ENCODE measurements at regions of chr11 and their contacts with region 1.

Region 1: GRCh38 chr11:83007909-83008580 is 63.7 kb downstream of the RAB30 start:
- DNase-seq: peak; percentile 88
- ATAC-seq: peak; percentile 96
- H3K4me3 ChIP-seq: peak overlapping the region; percentile 16 to 40 (median 40)
- H3K27ac ChIP-seq: peak overlapping the region; percentile 72
- H3K4me1 ChIP-seq: peaks cover 71% of the 10 kb centered on the region
- H3K27me3 ChIP-seq: no peaks in the 10 kb centered on the region
- CTCF ChIP-seq: peak; percentile 42
- EP300 ChIP-seq: peak in 1 of 2 experiments; percentile 93; a peak in 2 of 4 replicates
- POLR2A ChIP-seq: no peak
- RAD21 ChIP-seq: peak; percentile 15; the same call in 1 of the 2 replicates

Region 2: DNA sequence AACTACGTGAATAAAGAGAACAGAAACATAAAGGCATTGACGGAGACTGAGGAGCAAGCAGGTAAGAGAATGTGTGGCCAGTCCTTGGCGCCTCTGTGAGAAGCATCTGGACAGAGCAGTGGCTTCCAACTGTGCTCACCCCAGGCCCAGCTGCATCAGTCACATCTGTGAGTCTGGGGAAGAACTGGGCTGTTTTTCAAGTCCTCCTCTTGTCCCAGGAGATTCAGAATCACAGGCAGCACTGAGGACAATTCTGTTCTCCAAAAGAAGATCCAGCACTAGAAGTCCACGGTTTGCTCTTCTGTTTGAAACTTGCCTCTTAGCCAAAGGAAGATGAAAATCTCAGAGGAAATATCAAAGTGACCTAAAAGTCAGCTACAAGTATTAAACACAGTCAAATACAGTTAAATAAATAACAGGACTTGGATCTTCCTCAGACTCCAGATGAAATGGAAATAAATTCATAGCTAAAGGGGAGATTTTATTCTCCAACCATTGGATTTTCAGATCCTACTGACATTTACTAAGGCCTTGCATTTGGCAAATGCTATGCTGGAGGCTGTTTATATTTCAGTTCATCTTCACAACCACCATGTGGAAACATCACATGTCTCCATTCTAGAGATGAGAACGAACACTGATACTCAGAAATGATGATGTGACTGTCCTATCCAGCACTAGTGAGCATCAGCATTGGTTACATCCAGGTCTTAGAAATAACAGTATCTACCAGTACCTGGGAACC is 288.5 kb before region 1 on chr11:
- CTCF ChIA-PET with region 1: no interaction called
- POLR2A ChIA-PET with region 1: no interaction called
- in situ Hi-C with region 1: no loop called
- intact Hi-C with region 1: no loop called
- DNase-seq: no peak
- ATAC-seq: no peak
- H3K4me3 ChIP-seq: no peak overlapping the region
- H3K27ac ChIP-seq: no peak overlapping the region
- H3K4me1 ChIP-seq: no peaks in the 10 kb centered on the region
- H3K27me3 ChIP-seq: peaks cover 0 to 16% of the 10 kb centered on the region in 2 experiments; a peak in 3 of 5 replicates
- CTCF ChIP-seq: no peak
- EP300 ChIP-seq: no peak
- POLR2A ChIP-seq: no peak
- RAD21 ChIP-seq: no peak

Region 3: GRCh38 chr11:82959987-82960778 is 47.9 kb before region 1 on chr11:
- CTCF ChIA-PET with region 1: no interaction called
- POLR2A ChIA-PET with region 1: interaction called, 10 read pairs
- in situ Hi-C with region 1: no loop called
- intact Hi-C with region 1: no loop called
- DNase-seq: no peak
- ATAC-seq: no peak
- H3K4me3 ChIP-seq: no peak overlapping the region
- H3K27ac ChIP-seq: no peak overlapping the region
- H3K4me1 ChIP-seq: peaks cover 16% of the 10 kb centered on the region
- H3K27me3 ChIP-seq: no peaks in the 10 kb centered on the region
- CTCF ChIP-seq: no peak
- EP300 ChIP-seq: no peak
- POLR2A ChIP-seq: no peak
- RAD21 ChIP-seq: no peak

Region 4: DNA sequence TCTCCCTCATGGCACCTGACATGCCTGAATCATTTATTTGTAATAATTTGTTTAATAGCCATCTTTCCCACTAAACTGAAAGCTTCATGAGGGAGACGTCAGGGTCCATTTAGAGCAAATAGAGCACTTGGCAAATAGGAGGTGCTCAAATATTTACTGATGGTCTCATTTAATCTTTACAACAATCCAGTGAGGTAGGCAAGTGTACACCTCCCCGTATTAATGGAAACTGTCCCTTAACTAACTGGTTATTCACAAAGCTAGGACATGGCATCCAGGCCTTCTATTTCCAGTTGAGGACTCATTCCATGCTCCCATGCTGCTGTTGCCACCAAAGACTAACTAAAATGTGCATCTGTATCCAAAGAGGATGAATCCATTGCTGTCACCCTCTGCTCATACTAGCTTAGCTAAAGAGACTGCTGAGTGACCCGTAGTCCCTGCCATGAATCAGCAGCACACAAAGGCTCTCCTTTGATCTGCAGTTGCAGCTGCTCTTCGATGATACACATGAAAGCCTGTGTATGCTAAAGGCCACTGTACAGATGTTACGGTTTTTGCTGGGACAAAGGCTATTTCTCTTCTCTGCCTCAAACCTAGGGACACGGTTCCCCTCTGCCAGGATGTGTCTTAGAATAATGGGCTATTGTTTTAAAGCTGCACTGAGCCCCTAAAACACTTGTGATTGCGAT is 19.0 kb before region 1 on chr11:
- CTCF ChIA-PET with region 1: no interaction called
- POLR2A ChIA-PET with region 1: interaction called, 15 read pairs
- in situ Hi-C with region 1: no loop called
- intact Hi-C with region 1: loop called (anchors 2 kb)
- DNase-seq: peak; percentile 96
- ATAC-seq: peak; percentile 99
- H3K4me3 ChIP-seq: peak overlapping the region; percentile 20 to 53 (median 22); a peak in 4 of 6 replicates
- H3K27ac ChIP-seq: peak overlapping the region; percentile 82
- H3K4me1 ChIP-seq: peaks cover 44% of the 10 kb centered on the region
- H3K27me3 ChIP-seq: no peaks in the 10 kb centered on the region
- CTCF ChIP-seq: peak; percentile 14; the same call in 1 of the 2 replicates
- EP300 ChIP-seq: peak; percentile 62 to 74; a peak in 3 of 4 replicates
- POLR2A ChIP-seq: no peak
- RAD21 ChIP-seq: peak; percentile 34; the same call in 1 of the 2 replicates

Region 5: DNA sequence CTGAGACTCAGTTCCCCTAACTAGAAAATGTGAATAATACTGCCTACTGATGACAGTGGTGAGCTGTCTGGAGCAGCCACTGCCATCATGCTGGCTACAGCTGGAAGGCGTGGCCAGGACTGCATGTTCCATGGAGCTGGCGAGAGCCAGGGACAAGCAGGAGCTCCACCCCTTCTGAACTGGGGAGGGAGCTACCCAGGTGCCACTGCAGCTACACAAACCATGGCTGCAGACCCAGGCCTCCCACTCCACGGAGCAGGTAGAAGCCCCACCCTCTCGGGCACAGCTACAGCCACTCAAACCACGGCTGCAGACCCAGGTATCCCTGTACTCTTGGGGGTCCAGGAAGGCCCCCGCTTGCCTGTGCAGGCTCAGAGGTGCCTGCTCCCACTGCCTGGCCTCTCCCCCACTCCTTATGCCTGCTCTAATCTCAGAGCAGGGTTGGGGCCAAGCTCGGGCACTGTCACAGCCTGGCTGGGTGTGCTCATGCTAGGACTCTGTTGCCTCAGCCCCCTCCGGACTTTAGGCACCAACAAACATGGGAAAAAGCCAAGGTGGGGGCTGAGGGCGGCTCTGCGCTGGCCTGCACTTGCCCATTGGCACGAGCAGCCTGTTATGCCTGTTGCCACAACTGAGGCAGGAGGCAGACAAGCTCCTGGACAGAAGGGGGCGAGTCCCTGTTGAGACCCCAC is 12.0 kb after region 1 on chr11:
- CTCF ChIA-PET with region 1: no interaction called
- POLR2A ChIA-PET with region 1: interaction called, 12 read pairs
- in situ Hi-C with region 1: no loop called
- intact Hi-C with region 1: no loop called
- DNase-seq: no peak
- ATAC-seq: peak; percentile 48; the same call in 2 of the 3 replicates
- H3K4me3 ChIP-seq: no peak overlapping the region
- H3K27ac ChIP-seq: no peak overlapping the region
- H3K4me1 ChIP-seq: peaks cover 39% of the 10 kb centered on the region
- H3K27me3 ChIP-seq: no peaks in the 10 kb centered on the region
- CTCF ChIP-seq: no peak
- EP300 ChIP-seq: no peak
- POLR2A ChIP-seq: no peak
- RAD21 ChIP-seq: no peak

Region 6: GRCh38 chr11:83025267-83025720 is 17.2 kb after region 1 on chr11:
- CTCF ChIA-PET with region 1: no interaction called
- POLR2A ChIA-PET with region 1: interaction called, 12 read pairs
- in situ Hi-C with region 1: no loop called
- intact Hi-C with region 1: no loop called
- DNase-seq: peak; percentile 55
- ATAC-seq: peak; percentile 87
- H3K4me3 ChIP-seq: 0 out of 6 replicates have a peak overlapping the region, but pooled peaks of 1 of the 3 experiments have one; percentile 1
- H3K27ac ChIP-seq: peak overlapping the region; percentile 39
- H3K4me1 ChIP-seq: peaks cover 61% of the 10 kb centered on the region
- H3K27me3 ChIP-seq: no peaks in the 10 kb centered on the region
- CTCF ChIP-seq: no peak
- EP300 ChIP-seq: peak in 1 of 2 experiments; percentile 64; a peak in 2 of 4 replicates
- POLR2A ChIP-seq: no peak
- RAD21 ChIP-seq: no peak

Region 7: GRCh38 chr11:83033972-83034672 is 26.1 kb after region 1 on chr11:
- CTCF ChIA-PET with region 1: no interaction called
- POLR2A ChIA-PET with region 1: interaction called, 11 read pairs
- in situ Hi-C with region 1: no loop called
- intact Hi-C with region 1: no loop called
- DNase-seq: no peak
- ATAC-seq: peak; percentile 75
- H3K4me3 ChIP-seq: 0 out of 6 replicates have a peak overlapping the region, but pooled peaks of 1 of the 3 experiments have one; percentile 27
- H3K27ac ChIP-seq: peak overlapping the region; percentile 19
- H3K4me1 ChIP-seq: peaks cover 39% of the 10 kb centered on the region
- H3K27me3 ChIP-seq: no peaks in the 10 kb centered on the region
- CTCF ChIP-seq: no peak
- EP300 ChIP-seq: no peak
- POLR2A ChIP-seq: no peak
- RAD21 ChIP-seq: no peak

Region 8: DNA sequence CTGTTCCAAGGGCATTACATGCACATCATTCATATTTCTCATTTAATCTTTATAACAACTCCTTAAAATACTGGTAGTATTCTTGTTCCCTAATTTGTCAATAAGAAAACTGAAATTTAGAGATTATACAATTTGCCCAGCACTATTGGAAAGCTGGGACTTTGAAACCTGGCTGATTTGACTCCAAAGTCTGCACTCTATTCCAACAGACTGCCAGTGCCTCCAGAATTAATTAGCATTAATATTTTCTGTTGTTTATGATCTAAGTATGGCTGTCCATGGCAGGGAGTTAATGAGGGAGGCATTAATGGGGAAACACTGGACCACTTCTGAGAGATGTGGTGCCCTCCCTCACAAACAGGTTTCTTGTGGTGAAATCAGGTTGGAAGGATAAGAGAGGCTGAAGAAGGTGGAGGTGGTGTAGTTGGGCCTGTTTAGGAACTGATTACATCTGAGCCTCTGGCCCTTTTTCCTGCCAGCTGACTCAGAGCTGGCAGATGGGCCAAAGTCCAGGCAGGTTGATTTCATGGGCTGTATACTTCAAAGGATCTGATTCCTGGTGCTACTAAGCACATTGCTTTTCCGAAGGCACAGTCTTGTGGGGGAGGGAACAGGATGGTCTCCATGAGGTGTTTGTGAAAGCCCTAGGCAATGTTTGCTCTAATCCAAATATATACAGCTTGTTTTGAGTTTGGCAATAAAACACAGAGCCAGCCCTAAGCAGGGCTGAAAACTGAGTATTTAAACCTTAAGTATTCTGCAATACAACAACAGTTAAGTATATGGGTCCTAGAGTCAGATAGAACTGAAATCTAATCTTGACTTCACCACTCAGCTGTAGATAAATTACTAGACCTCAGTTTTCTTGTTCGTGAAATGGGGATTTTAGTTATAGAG is 84.7 kb after region 1 on chr11:
- CTCF ChIA-PET with region 1: no interaction called
- POLR2A ChIA-PET with region 1: interaction called, 10 read pairs
- in situ Hi-C with region 1: no loop called
- intact Hi-C with region 1: no loop called
- DNase-seq: peak; percentile 98
- ATAC-seq: peak; percentile 97
- H3K4me3 ChIP-seq: peak overlapping the region in 2 of 3 experiments; percentile 0 to 33; a peak in 1 of 6 replicates
- H3K27ac ChIP-seq: peak overlapping the region; percentile 90
- H3K4me1 ChIP-seq: peaks cover 32% of the 10 kb centered on the region
- H3K27me3 ChIP-seq: no peaks in the 10 kb centered on the region
- CTCF ChIP-seq: no peak
- EP300 ChIP-seq: peak in 1 of 2 experiments; percentile 91; a peak in 2 of 4 replicates
- POLR2A ChIP-seq: peak; percentile 31 to 41; a peak in 2 of 4 replicates
- RAD21 ChIP-seq: peak; percentile 40; the same call in 1 of the 2 replicates

Measured in HepG2 (cell line).